ENCODE measurements at regions of chr20 and their contacts with region 1.

Region 1: GRCh38 chr20:50645253-50646118 is 45.9 kb downstream of the RIPOR3 start:
- DNase-seq: peak; percentile 100
- ATAC-seq: peak; percentile 93
- H3K4me3 ChIP-seq: no peak overlapping the region
- H3K27ac ChIP-seq: peak overlapping the region; percentile 98
- H3K4me1 ChIP-seq: peaks cover 19% of the 10 kb centered on the region
- H3K27me3 ChIP-seq: no peaks in the 10 kb centered on the region
- CTCF ChIP-seq: 0 out of 2 replicates have a peak, but pooled peaks have one; percentile 10
- POLR2A ChIP-seq: no peak
- RAD21 ChIP-seq: no peak

Region 2: DNA sequence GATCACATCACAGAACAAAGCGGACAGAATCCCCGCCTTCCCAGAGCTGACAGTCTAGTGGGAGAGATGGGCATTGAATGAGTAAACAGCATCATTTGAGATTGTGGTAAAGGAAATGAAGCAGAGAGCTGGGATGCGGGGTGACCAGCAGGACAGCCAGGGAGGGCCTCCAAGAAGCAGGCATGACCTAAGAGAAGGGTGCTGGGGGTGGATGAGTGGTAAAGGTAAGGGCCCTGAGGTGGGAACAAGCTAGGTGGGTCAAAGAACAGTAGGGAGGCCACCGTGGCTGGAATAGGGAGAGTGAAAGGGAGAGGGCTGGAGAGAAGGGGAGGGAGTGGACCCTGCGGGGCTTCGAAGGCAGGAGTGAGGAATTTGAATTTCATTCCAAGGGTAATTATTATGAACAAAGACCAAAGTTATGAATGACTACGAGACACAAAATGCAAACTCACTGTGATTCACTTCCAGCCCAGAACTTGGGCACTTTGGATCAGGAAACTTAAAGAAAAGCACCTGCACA is 393.4 kb before region 1 on chr20:
- CTCF ChIA-PET with region 1: no interaction called
- POLR2A ChIA-PET with region 1: no interaction called
- dilution Hi-C with region 1: no loop called
- in situ Hi-C with region 1: no loop called
- intact Hi-C with region 1: no loop called
- DNase-seq: peak; percentile 87
- ATAC-seq: peak; percentile 72
- H3K4me3 ChIP-seq: no peak overlapping the region
- H3K27ac ChIP-seq: peak overlapping the region; percentile 85
- H3K4me1 ChIP-seq: peaks cover 17% of the 10 kb centered on the region
- H3K27me3 ChIP-seq: no peaks in the 10 kb centered on the region
- CTCF ChIP-seq: no peak
- POLR2A ChIP-seq: peak; percentile 51; the same call in 1 of the 2 replicates
- RAD21 ChIP-seq: no peak

Region 3: DNA sequence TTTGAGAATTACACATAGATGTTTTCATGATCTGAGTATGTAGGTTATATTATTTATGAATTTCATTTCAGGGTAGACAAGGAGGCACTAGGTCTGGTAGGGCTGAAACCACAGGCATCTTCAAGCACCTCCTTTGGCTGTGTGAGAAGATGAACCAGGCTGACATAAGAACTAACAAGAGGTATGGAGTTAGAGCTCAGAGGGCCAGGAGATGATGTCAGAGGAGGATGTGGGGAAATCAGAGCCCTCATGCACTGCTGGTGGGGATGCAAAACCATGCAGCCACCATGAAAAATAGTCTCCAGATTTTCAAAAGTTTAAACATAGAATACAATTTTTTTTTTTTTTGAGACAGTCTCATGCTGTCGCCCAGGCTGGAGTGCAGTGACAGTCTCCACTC is 59.5 kb after region 1 on chr20:
- CTCF ChIA-PET with region 1: no interaction called
- POLR2A ChIA-PET with region 1: no interaction called
- dilution Hi-C with region 1: no loop called
- in situ Hi-C with region 1: no loop called
- intact Hi-C with region 1: loop called (anchors 5 kb)
- DNase-seq: peak; percentile 87
- ATAC-seq: peak; percentile 83
- H3K4me3 ChIP-seq: no peak overlapping the region
- H3K27ac ChIP-seq: no peak overlapping the region
- H3K4me1 ChIP-seq: peaks cover 2% of the 10 kb centered on the region
- H3K27me3 ChIP-seq: no peaks in the 10 kb centered on the region
- CTCF ChIP-seq: no peak
- POLR2A ChIP-seq: no peak
- RAD21 ChIP-seq: no peak

Region 4: DNA sequence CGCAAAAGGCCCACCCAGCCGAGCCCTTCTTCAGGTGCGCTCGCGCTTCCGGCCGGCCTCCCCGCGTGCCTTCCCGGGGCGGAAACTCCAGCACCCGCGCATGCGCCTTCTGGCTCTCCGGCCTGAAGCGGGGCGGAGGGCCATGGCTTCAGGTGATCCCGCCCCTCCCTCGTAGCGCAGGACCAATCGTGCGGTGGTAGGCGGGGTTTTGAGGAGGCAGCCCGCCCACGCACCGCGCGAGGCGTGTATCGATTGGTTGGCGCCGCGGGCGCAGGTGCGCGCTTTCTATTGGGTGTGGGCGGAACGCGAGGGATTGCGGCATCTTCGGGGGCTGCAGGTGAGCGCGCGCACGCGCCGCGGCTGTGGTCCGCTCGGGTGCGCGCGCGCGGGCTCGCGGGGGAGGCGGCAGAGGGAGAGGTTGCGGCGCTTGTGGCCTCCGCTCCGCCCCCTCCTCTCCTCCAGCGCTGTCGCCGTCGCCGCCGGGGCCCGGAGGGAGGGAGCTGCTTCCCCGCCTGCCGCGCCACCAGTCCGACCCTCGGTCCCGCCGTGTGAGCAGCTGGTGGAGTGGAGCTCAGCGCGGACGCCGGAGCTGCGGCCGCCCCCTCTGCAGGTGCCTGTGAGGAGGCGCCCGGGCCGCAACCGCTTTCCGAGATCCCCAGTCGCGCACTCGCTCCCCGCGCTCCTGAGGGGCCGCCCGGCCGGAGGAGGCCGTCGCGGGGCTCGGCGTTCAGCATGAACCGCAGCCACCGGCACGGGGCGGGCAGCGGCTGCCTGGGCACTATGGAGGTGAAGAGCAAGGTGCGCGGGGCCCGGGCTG is 85.8 kb after region 1 on chr20 and contains the start of gene PARD6B:
- CTCF ChIA-PET with region 1: no interaction called
- POLR2A ChIA-PET with region 1: no interaction called
- dilution Hi-C with region 1: no loop called
- in situ Hi-C with region 1: no loop called
- intact Hi-C with region 1: loop called (anchors 5 kb)
- DNase-seq: peak; percentile 92
- ATAC-seq: peak; percentile 98
- H3K4me3 ChIP-seq: peak within 1 kb of the TSS; percentile 80
- H3K27ac ChIP-seq: peak within 1 kb of the TSS; percentile 20; the same call in 1 of the 2 replicates
- H3K4me1 ChIP-seq: peaks cover 3% of the 10 kb centered on the region
- H3K27me3 ChIP-seq: peaks cover 3% of the 10 kb centered on the region; the same call in 1 of the 2 replicates
- CTCF ChIP-seq: no peak
- POLR2A ChIP-seq: no peak
- RAD21 ChIP-seq: no peak
- total RNA-seq, gene PARD6B: 0.90 and 1.4 TPM in 2 replicates